Adrenal gland (tissue), 19 donors: ENCODE measurements at regions of chr3 and their contacts with region 1.

Region 1: GRCh38 chr3:129942296-129942695 is 32.2 kb upstream of the TRH start:
- DNase-seq: peak; percentile 48 to 85 (median 65)
- H3K4me3 ChIP-seq: no peak overlapping the region
- H3K27ac ChIP-seq: no peak overlapping the region
- H3K4me1 ChIP-seq: no peaks in the 10 kb centered on the region
- H3K27me3 ChIP-seq: peaks cover 4% of the 10 kb centered on the region
- CTCF ChIP-seq: peak; percentile 67 to 92 (median 86)
- POLR2A ChIP-seq: no peak

Region 2: DNA sequence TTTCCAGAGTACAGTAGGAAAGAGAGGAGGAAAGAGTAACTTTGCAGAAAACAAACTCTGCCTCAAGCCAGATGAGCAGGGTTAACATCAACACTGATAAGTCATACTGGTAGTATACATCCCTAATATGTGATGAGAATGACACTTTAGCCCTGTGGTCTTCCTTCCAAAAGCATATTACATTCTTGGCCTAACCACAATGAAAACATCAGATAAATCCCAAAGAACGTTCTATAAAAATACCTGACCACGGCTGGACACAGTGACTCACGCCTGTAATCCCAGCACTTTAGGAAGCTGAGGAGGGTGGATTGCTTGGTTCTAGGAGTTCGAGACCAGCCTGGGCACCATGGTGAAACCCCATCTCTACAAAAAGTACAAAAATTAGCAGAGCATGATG is 53.6 kb before region 1 on chr3:
- intact Hi-C with region 1: no loop called
- DNase-seq: no peak
- H3K4me3 ChIP-seq: no peak overlapping the region
- H3K27ac ChIP-seq: no peak overlapping the region
- H3K4me1 ChIP-seq: peaks cover 35 to 42% of the 10 kb centered on the region in 2 donors
- H3K27me3 ChIP-seq: no peaks in the 10 kb centered on the region
- CTCF ChIP-seq: no peak
- POLR2A ChIP-seq: no peak

Region 3: DNA sequence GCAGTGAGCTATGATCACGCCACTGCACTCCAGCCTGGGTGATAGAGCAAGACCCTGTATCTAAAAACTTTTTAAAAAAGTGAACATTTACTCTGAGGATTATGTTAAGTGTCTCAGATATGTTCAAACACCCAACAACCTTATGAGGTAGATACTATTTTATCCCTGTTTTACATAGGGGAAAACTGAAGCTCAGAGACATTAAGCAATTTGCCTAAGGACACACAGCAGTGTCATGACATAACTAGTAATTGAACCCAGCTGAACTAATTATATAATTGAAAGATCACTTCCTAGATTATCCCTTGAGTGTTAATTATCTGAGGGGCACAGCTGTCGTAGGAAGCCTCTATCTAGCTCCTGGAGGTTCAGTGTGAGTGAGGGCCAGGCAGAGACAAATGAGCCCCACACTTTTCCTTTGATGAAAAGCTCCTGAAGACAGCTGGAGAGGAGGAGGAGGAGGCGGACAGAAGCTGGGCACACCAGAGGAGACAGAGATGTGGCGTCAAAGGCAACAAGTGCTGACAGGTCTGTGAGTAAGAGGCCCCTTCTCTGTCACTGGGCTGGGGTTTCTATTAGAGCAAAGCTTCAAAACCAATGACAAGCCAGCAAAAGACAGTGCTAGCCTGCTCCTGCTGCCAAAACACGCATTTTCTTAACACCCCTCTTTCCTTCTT is 52.7 kb after region 1 on chr3:
- intact Hi-C with region 1: loop called in 1 of 2 experiments (anchors 5 kb)
- DNase-seq: no peak
- H3K4me3 ChIP-seq: no peak overlapping the region
- H3K27ac ChIP-seq: no peak overlapping the region
- H3K4me1 ChIP-seq: no peaks in the 10 kb centered on the region
- H3K27me3 ChIP-seq: no peaks in the 10 kb centered on the region
- CTCF ChIP-seq: no peak
- POLR2A ChIP-seq: no peak

Region 4: DNA sequence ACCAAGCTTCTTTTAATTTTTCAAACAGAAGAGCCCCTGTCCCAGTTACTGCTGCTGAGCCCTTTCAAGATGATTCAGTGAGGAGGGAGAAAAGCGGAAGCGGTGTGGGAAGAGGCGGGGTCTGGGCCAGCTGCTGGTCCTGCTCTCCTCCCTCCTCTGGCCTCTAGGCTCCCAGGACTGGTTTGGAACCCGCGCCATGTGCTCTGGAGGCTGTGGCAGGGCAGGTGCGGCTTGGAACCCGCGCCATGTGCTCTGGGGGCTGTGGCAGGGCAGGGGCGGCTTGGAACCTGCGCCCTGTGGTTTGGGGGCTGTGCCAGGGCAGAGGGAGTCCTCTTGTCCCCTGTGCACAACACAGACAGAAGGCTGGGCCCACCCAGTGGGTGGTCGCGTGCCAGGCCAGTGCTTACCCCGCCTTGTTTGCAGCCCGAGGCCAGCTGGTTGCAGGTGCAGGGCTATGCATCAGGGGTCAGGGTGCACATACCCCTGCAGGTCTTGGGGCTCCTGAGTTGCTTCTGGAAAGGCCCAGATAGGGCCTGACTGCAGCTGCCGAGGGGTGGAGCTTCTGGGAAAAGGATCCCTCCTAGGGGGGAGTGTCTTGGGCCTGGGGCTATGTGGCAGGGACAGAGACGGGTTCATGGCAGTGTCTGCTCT is 151.6 kb after region 1 on chr3:
- intact Hi-C with region 1: loop called in 1 of 2 experiments (anchors 10 kb)
- DNase-seq: no peak
- H3K4me3 ChIP-seq: no peak overlapping the region
- H3K27ac ChIP-seq: no peak overlapping the region
- H3K4me1 ChIP-seq: no peaks in the 10 kb centered on the region
- H3K27me3 ChIP-seq: no peaks in the 10 kb centered on the region
- CTCF ChIP-seq: no peak
- POLR2A ChIP-seq: no peak

Region 5: GRCh38 chr3:130258532-130258952 is 316.2 kb after region 1 on chr3:
- intact Hi-C with region 1: no loop called
- DNase-seq: peak in 6 of 7 donors; percentile 49 to 79 (median 58)
- H3K4me3 ChIP-seq: no peak overlapping the region
- H3K27ac ChIP-seq: peak overlapping the region in 2 of 5 donors; percentile 23 to 34
- H3K4me1 ChIP-seq: peaks cover 11 to 20% of the 10 kb centered on the region in 2 donors
- H3K27me3 ChIP-seq: no peaks in the 10 kb centered on the region
- CTCF ChIP-seq: no peak
- POLR2A ChIP-seq: no peak

Region 6: DNA sequence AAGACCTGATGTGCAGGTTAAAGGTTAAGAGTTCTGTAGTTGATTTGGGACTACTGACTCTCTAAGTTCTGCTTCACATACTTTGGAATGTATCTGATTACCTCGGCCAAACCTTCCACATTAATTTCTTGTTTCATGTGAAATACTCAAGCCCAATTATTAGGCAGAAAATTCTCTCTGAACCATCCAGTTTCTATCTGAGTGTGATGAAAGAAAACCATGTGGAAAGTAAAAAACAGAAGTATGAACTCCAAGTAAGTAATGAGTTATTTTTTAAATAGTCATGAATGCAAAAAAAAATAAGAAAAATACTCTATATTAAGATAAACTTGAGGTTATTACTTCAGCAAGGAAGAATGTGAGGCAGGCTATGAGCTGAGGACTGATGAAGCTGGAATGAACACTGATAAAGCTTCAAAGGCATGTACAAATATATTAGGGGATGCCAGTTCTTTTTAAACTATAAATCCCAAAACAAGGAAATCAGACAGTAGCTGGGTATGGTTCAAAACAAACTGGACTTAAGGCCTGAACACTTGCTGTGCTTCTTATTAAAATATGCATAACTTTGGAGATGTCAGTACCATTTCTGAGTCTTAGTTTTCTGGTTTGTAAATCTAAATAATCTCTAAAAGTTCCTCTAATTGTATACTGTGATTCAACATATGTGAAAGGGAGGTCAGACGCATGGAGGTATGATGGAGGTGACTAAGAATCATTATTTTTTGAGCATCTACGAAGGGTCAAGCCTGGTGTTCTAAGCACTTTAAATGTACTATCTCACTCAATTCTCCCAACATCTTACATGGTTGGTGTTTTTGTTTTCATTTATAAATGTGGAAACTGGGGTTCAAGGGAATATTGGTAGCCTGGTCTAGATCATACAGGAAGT is 634.3 kb after region 1 on chr3:
- intact Hi-C with region 1: no loop called
- DNase-seq: no peak
- H3K4me3 ChIP-seq: no peak overlapping the region
- H3K27ac ChIP-seq: no peak overlapping the region
- H3K4me1 ChIP-seq: no peaks in the 10 kb centered on the region
- H3K27me3 ChIP-seq: no peaks in the 10 kb centered on the region
- CTCF ChIP-seq: no peak
- POLR2A ChIP-seq: no peak